Activated naive CD8-positive, alpha-beta T cell treated with anti-CD3 and anti-CD28 coated beads, Interleukin-2, amount 10 ng/mL, durations not matched to agents 7 days and 5 days (primary cell): ENCODE measurements at regions of chr2 and their contacts with region 1.

Region 1: GRCh38 chr2:101252408-101253012 is at the start of gene CNOT11:
- DNase-seq: peak; percentile 98
- ATAC-seq: peak; percentile 83
- H3K4me3 Mint-ChIP-seq: peak within 1 kb of the TSS; percentile 93
- H3K27ac Mint-ChIP-seq: peak within 1 kb of the TSS; percentile 97
- H3K4me1 Mint-ChIP-seq: peaks cover 37% of the 10 kb centered on the region
- H3K27me3 Mint-ChIP-seq: no peaks in the 10 kb centered on the region
- total RNA-seq, gene CNOT11: 64.2 to 65.0 TPM

Region 2: DNA sequence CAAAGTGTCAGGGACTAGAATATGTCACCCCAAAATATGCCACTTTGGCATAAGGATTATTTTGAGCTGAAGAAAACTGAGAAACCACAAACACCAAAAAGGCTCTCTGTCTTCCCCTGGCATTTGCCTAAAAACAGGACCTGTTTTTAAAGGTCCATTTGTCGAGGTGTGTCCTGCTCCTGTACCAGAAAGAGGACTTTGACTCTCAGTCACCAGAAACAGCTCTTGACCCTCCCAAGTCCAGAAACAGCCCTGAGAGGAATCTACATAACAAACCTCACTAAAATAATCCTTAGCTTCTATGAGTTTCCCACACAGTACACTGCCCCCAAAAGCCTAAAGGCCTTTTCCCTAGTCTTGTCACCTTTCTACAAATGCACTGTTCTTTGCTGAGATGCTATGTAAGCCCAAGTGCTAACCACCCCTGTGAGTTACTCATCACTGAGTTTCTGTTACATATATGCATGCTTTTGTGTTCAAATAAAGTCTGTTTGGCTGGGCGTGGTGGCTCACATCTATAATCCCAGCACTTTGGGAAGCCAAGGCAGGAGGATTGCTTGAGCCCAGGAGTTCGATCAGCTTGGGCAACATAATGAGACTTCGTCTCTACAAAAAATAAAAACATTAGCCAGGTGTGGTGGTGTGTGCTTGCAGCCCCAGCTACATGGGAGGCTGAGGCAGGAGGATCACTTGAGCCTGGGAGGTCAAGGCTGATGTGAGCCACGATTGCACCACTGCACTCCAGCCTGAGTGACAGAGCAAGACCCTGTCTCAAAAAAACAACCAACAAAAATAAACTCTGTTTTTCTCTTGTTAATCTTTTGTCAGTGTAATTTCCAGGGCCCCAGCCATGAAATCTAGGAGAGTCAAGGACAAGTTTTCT is 195.2 kb before region 1 on chr2:
- POLR2A ChIA-PET with region 1: no interaction called
- DNase-seq: no peak
- ATAC-seq: no peak
- H3K4me3 Mint-ChIP-seq: no peak overlapping the region
- H3K27ac Mint-ChIP-seq: no peak overlapping the region
- H3K4me1 Mint-ChIP-seq: no peaks in the 10 kb centered on the region
- H3K27me3 Mint-ChIP-seq: peaks cover 8% of the 10 kb centered on the region

Region 3: GRCh38 chr2:101223814-101224231 is 28.7 kb before region 1 on chr2:
- POLR2A ChIA-PET with region 1: interaction called, 16 read pairs
- DNase-seq: peak; percentile 53
- ATAC-seq: peak; percentile 96
- H3K4me3 Mint-ChIP-seq: peak overlapping the region; percentile 64
- H3K27ac Mint-ChIP-seq: peak overlapping the region; percentile 88
- H3K4me1 Mint-ChIP-seq: peaks cover 17% of the 10 kb centered on the region
- H3K27me3 Mint-ChIP-seq: no peaks in the 10 kb centered on the region

Region 4: DNA sequence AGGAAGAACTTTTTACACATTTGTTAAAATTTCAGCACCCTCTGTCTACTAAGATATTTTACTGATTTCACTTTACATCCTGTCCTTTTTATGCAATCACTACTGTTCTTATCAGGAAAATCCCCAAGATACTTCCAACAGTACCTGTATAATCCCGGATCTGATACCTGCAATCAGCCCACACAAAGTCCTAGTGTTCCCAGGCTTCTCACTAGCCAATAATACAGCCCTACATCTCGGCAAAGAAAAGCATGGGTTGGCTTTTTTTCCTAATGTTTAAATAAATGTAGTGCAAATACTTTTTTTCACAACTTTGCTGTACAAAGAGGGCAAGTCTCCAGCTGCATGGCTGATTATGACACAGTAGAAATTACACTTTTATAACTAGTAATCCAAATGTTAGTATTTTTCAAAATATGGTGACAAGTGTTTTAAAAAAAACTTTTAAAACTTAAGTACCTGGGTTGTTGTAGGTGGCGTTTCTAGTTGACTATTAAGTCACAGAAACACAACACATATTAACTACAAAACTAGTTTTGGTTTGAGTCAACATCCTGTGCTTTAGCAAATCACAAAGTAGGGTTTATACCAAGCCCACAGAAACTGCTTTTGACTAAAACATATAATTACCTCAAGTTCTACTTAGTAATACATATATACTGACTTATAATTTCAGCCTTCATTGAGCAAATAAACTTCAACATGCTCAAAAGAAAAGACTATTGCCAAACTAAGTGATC is 19.7 kb after region 1 on chr2:
- POLR2A ChIA-PET with region 1: interaction called, 20 read pairs
- DNase-seq: no peak
- ATAC-seq: peak; percentile 87
- H3K4me3 Mint-ChIP-seq: peak overlapping the region; percentile 46
- H3K27ac Mint-ChIP-seq: peak overlapping the region; percentile 76
- H3K4me1 Mint-ChIP-seq: peaks cover 43% of the 10 kb centered on the region
- H3K27me3 Mint-ChIP-seq: no peaks in the 10 kb centered on the region

Region 5: GRCh38 chr2:101308432-101309210 is 56.1 kb after region 1 on chr2 and contains the start of gene RNF149:
- POLR2A ChIA-PET with region 1: interaction called, 28 read pairs
- DNase-seq: peak; percentile 97
- ATAC-seq: peak; percentile 78
- H3K4me3 Mint-ChIP-seq: peak within 1 kb of the TSS; percentile 98
- H3K27ac Mint-ChIP-seq: peak within 1 kb of the TSS; percentile 96
- H3K4me1 Mint-ChIP-seq: peaks cover 50% of the 10 kb centered on the region
- H3K27me3 Mint-ChIP-seq: no peaks in the 10 kb centered on the region
- total RNA-seq, gene RNF149: 90.1 to 90.3 TPM

Region 6: DNA sequence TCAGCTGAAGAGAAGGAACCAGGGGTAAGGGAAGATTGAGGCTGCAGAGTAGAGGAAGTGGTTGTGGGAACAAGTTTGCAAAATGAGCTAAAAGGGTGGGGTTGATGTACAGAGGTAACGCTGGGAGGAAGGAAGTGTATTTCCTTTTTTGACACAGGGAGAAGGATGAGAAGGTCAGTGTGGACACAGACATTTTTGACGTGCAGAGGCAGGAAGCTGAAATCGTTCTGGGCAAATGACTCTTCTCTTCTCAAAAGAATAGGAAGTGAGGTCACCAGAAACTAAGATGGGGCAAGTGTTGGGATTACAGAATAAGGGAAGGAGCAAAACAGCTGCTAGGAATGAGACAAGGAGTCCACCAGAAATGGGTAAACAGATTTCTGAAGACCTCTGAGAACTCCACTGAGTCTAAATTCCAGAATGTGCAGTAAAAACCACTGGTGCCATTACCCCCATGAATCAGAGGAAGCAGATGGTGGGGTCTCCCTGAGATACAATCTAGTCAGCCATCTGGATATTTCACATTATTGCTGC is 76.0 kb after region 1 on chr2:
- POLR2A ChIA-PET with region 1: interaction called, 19 read pairs
- DNase-seq: no peak
- ATAC-seq: peak; percentile 93
- H3K4me3 Mint-ChIP-seq: no peak overlapping the region
- H3K27ac Mint-ChIP-seq: no peak overlapping the region
- H3K4me1 Mint-ChIP-seq: peaks cover 21% of the 10 kb centered on the region
- H3K27me3 Mint-ChIP-seq: no peaks in the 10 kb centered on the region

Region 7: GRCh38 chr2:101387151-101387807 is 134.8 kb after region 1 on chr2 and contains the start of gene CREG2:
- POLR2A ChIA-PET with region 1: interaction called, 10 read pairs
- DNase-seq: peak; percentile 82
- ATAC-seq: peak; percentile 83
- H3K4me3 Mint-ChIP-seq: peak within 1 kb of the TSS; percentile 58
- H3K27ac Mint-ChIP-seq: no peak within 1 kb of the TSS
- H3K4me1 Mint-ChIP-seq: peaks cover 7% of the 10 kb centered on the region
- H3K27me3 Mint-ChIP-seq: peaks cover 69% of the 10 kb centered on the region
- total RNA-seq, gene CREG2: not detected